ENCODE measurements at regions of chr7 and their contacts with region 1.

Region 1: GRCh38 chr7:91264046-91264923 is at the start of gene FZD1:
- DNase-seq: peak; percentile 92 to 98
- H3K4me3 ChIP-seq: peak within 1 kb of the TSS; percentile 65 to 79
- H3K27ac ChIP-seq: peak within 1 kb of the TSS; percentile 88 to 97
- H3K4me1 ChIP-seq: peaks cover 0 to 3% of the 10 kb centered on the region in 2 donors
- H3K27me3 ChIP-seq: no peaks in the 10 kb centered on the region
- CTCF ChIP-seq: peak in 2 of 3 experiments; percentile 10 to 26
- total RNA-seq, gene FZD1: 39.1 TPM

Region 2: DNA sequence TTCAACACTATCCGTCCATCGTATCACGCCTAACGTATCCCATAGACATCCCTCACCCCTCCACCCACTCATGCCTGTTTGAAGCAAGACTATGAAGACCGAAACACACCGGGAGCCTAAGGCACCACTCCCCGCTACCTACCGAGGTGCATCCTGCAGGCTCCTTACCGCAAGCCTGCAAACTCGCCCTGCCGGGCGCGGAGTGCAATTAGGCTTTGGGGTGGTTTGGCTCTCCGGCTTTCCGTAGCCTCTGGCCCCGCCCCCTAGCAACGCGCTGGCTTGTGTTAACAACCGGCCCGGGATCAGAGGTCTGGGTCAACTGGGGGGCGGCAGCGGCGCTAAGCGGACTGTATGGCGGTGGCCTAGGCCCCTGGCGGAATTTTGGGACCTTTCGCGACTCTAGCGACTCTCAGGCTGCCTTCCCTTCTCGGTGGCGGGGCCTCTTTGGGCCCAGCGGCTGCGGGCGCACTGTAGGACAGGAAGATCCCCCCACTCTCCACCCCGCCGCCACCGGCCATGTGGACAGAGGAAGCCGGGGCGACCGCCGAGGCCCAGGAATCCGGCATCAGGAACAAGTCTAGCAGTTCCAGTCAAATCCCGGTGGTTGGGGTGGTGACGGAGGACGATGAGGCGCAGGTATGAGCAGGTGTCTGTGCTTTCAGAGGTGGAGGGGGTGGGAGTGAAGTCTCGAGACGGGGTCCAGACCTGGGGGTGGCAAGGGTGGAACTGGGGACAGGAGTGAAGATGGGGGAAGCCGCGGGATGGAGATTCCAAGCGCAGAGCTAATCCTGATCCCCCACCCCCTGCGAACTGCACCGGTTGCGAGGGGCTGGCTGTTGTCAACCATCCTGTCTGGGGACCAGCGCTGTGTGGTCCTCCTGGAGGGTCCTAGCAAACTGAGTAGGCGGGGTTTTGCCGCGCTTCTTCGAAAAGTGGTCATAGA is 1019.1 kb before region 1 on chr7 and contains the start of gene CFAP69:
- intact Hi-C with region 1: loop called (anchors 10 kb)
- DNase-seq: peak; percentile 37 to 96
- H3K4me3 ChIP-seq: peak within 1 kb of the TSS; percentile 88 to 90
- H3K27ac ChIP-seq: peak within 1 kb of the TSS in 1 of 2 donors; percentile 48
- H3K4me1 ChIP-seq: peaks cover 3 to 8% of the 10 kb centered on the region in 2 donors
- H3K27me3 ChIP-seq: no peaks in the 10 kb centered on the region
- CTCF ChIP-seq: peak in 2 of 3 experiments; percentile 20 to 28
- total RNA-seq, gene CFAP69: 0.85 TPM

Region 3: DNA sequence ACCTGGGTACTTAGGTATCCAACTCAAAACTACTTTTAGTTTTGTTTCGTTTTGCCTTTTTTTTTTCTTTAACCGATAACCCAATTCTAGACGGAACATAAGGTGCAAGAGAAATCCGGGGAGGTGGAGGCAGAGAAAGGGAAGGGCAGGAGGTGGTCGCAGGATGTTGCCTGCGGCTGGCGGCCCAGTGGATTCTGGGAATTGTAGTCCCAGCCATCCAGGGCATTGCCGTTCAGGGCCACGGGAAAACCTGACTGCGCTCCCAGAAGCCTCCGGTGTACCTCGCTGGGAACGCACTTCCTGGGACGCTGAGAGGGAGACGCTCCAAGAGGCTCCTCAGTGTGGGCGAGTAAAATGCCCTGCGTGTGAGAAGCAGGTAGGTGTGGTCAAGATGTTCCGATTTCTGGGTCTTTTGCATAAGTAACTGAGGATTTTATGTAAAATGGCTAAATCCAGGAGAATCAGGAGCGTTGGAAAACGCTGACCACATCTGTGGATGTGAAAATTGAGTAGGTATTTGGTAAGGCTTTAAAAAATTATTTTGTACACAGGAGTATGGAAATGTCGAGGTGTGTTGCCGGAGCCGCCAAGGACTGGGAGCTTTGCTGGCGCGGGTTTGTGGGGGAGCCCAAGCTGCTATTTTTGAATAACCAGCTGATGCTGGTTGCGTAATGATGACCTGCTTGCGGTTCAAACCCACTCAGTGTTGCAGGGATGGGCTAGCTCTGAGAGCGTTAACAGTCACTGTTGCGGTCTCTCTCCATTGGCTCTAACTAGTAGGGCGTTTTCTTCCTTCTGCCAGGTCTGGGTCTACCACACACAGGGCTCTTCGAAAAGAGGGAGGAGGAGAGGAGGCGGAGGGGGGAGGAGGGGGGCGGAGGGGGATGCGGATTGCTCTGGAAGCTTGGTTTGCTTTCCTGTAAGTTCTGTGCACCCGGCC is 860.8 kb before region 1 on chr7 and contains the start of gene CLDN12:
- intact Hi-C with region 1: loop called (anchors 10 kb)
- DNase-seq: peak; percentile 61 to 91
- H3K4me3 ChIP-seq: peak within 1 kb of the TSS; percentile 63 to 69
- H3K27ac ChIP-seq: peak within 1 kb of the TSS; percentile 84 to 88
- H3K4me1 ChIP-seq: no peaks in the 10 kb centered on the region
- H3K27me3 ChIP-seq: no peaks in the 10 kb centered on the region
- CTCF ChIP-seq: no peak
- total RNA-seq, gene CLDN12: 55.3 TPM

Region 4: DNA sequence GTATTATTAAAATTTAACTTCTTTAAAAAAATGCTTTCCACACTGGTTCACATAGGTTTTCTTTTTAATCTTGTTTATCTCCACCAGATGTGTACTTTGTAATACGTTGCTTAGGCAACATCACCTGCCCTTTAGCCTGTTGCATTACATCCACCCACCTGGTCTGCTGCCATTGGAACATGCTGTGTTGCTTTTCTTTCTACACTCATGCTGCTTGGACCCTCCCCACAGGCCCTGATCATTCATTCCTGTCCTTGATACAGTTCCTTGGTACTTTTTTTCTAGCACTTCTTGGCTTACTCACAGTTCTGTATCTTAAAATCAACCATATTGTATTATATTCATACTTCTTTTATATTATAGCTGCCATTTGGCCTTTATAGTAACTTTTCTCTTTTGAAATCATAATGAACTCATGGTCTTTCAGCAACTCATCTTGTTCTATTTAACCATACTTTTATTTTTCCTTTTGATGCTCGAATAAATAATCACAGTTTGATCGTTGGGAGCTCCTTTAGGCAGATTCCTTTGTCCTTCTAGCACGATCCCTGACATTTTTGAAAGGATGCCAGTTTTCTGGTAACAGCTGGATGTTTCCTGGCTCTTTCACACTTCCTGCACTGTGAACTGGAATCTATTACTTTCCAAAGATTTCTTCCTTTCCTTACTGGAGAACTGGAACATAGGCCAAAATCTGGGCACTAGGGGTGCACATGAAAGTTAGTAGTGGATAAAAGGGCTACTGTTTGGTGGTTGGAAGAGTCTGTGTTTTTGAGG is 543.1 kb before region 1 on chr7:
- intact Hi-C with region 1: loop called (anchors 10 kb)
- DNase-seq: no peak
- H3K4me3 ChIP-seq: no peak overlapping the region
- H3K27ac ChIP-seq: peak overlapping the region in 1 of 2 donors; percentile 4
- H3K4me1 ChIP-seq: peaks cover 0 to 7% of the 10 kb centered on the region in 2 donors
- H3K27me3 ChIP-seq: no peaks in the 10 kb centered on the region
- CTCF ChIP-seq: no peak

Region 5: DNA sequence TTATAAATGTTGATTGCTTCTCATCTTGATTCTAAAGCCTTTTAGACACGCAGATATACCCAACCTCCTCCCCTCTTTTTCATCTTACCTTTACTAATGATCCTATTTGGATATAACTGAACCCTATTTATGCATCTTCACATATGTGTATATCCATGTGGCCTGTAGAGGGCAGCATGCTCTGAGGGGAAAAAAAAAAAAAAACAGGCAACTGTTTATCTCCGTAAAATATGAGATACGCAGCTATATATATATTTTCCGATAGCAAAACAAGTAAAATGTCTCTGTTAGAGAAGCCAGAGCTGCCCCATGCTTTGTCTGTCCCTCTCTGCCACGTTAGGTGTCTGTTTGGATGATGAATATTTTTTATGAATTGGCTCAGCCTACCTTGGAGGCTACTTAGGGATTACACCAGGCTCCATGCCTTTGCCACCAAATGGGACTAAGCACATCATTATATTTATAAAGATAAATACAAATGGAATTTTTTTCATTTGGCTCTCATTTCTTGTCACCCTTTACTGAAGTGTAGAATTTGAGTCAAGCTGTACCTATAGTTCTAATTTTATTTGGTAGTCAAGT is 174.8 kb before region 1 on chr7:
- intact Hi-C with region 1: loop called (anchors 5 kb)
- DNase-seq: no peak
- H3K4me3 ChIP-seq: peak overlapping the region; percentile 18 to 29
- H3K27ac ChIP-seq: no peak overlapping the region
- H3K4me1 ChIP-seq: peaks cover 0 to 2% of the 10 kb centered on the region in 2 donors
- H3K27me3 ChIP-seq: no peaks in the 10 kb centered on the region
- CTCF ChIP-seq: peak in 2 of 3 experiments; percentile 71 to 76

Region 6: GRCh38 chr7:91880413-91881241 is 616.3 kb after region 1 on chr7 and contains the start of gene MTERF1:
- intact Hi-C with region 1: loop called (anchors 5 kb)
- DNase-seq: peak; percentile 23 to 93
- H3K4me3 ChIP-seq: peak within 1 kb of the TSS; percentile 82 to 83
- H3K27ac ChIP-seq: peak within 1 kb of the TSS in 1 of 2 donors; percentile 9
- H3K4me1 ChIP-seq: peaks cover 0 to 9% of the 10 kb centered on the region in 2 donors
- H3K27me3 ChIP-seq: no peaks in the 10 kb centered on the region
- CTCF ChIP-seq: peak; percentile 83 to 98 (median 96)
- total RNA-seq, gene MTERF1: 5.0 TPM

Region 7: GRCh38 chr7:92134271-92135051 is 870.2 kb after region 1 on chr7 and contains the start of gene CYP51A1:
- intact Hi-C with region 1: loop called (anchors 2 kb)
- DNase-seq: peak; percentile 77 to 97
- H3K4me3 ChIP-seq: peak within 1 kb of the TSS; percentile 67 to 88
- H3K27ac ChIP-seq: peak within 1 kb of the TSS; percentile 92 to 93
- H3K4me1 ChIP-seq: peaks cover 0 to 10% of the 10 kb centered on the region in 2 donors
- H3K27me3 ChIP-seq: no peaks in the 10 kb centered on the region
- CTCF ChIP-seq: no peak
- total RNA-seq, gene CYP51A1: 19.9 TPM

Measured in ascending aorta (tissue), 2 donors.